Activated CD4-positive, alpha-beta T cell treated with anti-CD3 and anti-CD28 coated beads, Interleukin-2, amount 10 ng/mL, durations not matched to agents 24 days and 14 days (primary cell): ENCODE measurements at regions of chr6 and their contacts with region 1.

Region 1: GRCh38 chr6:1604158-1605030 is 5.3 kb upstream of the FOXC1 start:
- DNase-seq: peak; percentile 90
- H3K4me3 Mint-ChIP-seq: no peak overlapping the region
- H3K27ac Mint-ChIP-seq: no peak overlapping the region
- H3K4me1 Mint-ChIP-seq: peaks cover 13% of the 10 kb centered on the region
- H3K27me3 Mint-ChIP-seq: peaks cover 81% of the 10 kb centered on the region

Region 2: DNA sequence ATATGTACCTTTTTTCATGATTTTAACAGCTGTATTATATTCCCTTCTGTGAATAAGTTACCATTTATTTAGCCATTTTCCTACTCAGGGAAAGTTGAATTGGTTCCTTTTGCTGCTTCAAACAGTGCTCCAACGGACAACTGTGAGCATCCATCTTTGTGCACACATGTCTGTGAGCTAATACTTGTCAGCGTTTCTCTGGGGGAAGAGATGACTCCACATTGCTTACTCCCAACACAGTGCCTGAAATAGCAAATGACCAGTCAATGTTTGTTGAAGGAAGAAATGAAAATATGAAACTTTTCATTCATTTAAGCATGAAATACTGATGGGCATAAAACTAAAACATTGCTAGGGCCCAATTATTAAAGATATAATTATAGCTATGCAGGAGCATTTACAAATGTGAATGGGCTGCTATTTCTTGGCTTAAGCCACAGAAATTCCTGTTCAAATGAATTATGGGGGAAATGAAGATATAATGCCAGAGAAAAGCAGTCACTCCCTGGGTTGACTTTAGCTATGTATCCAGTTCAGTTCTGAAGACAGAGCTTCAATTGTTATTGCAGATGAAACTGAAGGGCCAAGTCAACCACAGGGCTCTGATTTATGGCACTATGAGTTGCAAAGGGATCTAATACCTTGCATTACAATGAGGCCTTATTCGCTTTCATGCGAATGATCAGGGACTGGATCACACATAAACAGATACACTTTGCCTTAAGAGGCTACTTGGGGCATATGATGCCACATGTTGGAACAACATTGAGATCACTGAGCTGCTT is 42.0 kb before region 1 on chr6:
- intact Hi-C with region 1: no loop called
- DNase-seq: no peak
- H3K4me3 Mint-ChIP-seq: no peak overlapping the region
- H3K27ac Mint-ChIP-seq: no peak overlapping the region
- H3K4me1 Mint-ChIP-seq: no peaks in the 10 kb centered on the region
- H3K27me3 Mint-ChIP-seq: peaks cover 31% of the 10 kb centered on the region

Region 3: GRCh38 chr6:1701668-1702353 is 97.4 kb after region 1 on chr6:
- intact Hi-C with region 1: no loop called
- DNase-seq: no peak
- H3K4me3 Mint-ChIP-seq: no peak overlapping the region
- H3K27ac Mint-ChIP-seq: no peak overlapping the region
- H3K4me1 Mint-ChIP-seq: peaks cover 2% of the 10 kb centered on the region
- H3K27me3 Mint-ChIP-seq: no peaks in the 10 kb centered on the region

Region 4: DNA sequence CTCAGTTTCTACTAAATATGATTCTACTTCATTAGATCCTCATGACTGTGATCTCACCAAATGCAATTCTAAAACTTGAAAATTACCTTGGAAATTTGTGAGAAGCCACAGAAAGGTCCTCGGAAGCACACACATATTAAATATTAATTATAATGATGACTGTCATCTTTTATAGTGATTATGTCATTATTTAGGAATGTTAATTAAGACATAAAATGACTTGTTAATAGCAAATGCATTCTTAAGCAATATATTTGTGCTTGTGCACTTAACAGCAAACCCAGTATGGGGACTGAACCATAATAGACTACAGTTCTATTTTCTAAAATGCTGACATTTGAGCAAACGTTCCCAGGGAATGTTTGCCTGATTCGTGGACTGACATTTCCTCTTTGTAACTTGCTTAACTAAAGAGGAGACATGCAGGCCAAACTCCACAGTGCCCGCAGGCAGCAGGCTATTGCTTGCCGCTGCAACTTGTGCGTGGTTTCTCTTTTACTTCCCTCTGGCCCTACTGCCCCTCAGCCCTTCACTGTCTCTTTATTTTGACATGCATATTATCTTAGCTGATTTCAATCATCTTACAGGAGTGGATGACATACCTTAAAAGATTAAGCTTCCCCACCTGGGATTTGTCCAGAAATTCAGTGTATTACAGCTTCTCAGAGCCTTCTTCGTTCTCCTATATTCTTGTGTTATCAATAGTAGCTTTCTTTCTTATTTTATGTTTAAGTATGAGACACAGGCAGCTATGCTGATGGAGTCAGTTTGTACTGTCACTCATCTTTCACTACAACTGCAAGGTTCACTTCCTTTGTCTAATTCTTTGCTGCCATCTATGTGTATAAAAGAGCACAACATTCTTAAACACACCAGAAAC is 499.5 kb after region 1 on chr6:
- intact Hi-C with region 1: loop called (anchors 2 kb)
- DNase-seq: no peak
- H3K4me3 Mint-ChIP-seq: no peak overlapping the region
- H3K27ac Mint-ChIP-seq: no peak overlapping the region
- H3K4me1 Mint-ChIP-seq: peaks cover 3% of the 10 kb centered on the region
- H3K27me3 Mint-ChIP-seq: no peaks in the 10 kb centered on the region

Region 5: GRCh38 chr6:2353412-2354137 is 749.2 kb after region 1 on chr6:
- intact Hi-C with region 1: loop called (anchors 1 kb)
- DNase-seq: peak; percentile 84
- H3K4me3 Mint-ChIP-seq: no peak overlapping the region
- H3K27ac Mint-ChIP-seq: no peak overlapping the region
- H3K4me1 Mint-ChIP-seq: no peaks in the 10 kb centered on the region
- H3K27me3 Mint-ChIP-seq: peaks cover 9% of the 10 kb centered on the region